ENCODE measurements at regions of chr1 and their contacts with region 1.

Region 1: GRCh38 chr1:160428655-160429054 is 28.3 kb downstream of the VANGL2 start:
- DNase-seq: peak; percentile 66
- H3K4me3 Mint-ChIP-seq: peak overlapping the region; percentile 23
- H3K27ac Mint-ChIP-seq: peak overlapping the region; percentile 88
- H3K4me1 Mint-ChIP-seq: peaks cover 65% of the 10 kb centered on the region
- H3K27me3 Mint-ChIP-seq: no peaks in the 10 kb centered on the region

Region 2: DNA sequence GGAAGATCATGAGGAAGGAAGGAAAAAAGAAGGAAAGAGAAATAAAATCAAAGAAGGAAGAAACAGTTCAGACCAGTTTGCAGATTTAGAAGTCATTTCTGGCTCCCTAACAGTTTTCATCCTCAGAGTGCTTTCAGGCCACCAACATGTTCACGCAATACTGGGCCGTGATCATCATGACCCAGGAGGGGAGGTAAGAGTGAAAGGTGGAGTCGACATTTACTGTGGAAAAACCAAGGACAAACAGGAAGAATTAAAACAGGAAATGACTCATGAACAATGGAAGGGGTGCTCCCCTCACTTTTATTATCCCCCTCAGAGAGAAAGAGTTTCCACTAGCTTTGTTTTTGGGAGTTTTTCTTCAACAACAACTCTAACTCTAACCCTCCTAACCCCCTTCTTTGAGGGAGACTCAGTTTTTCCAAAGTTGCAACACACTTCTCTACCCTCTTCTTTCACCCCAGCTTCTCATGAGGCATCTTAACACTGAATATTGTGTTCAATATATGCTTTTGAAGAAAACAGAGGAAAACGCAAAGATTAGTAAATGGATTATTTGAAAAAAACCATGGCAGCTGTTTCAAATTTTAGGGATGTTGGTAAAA is 32.1 kb after region 1 on chr1:
- CTCF ChIA-PET with region 1: interaction called, 11 read pairs
- intact Hi-C with region 1: loop called (anchors 1 kb)
- DNase-seq: peak; percentile 66
- H3K4me3 Mint-ChIP-seq: peak overlapping the region; percentile 68
- H3K27ac Mint-ChIP-seq: peak overlapping the region; percentile 99
- H3K4me1 Mint-ChIP-seq: peaks cover 91% of the 10 kb centered on the region
- H3K27me3 Mint-ChIP-seq: no peaks in the 10 kb centered on the region

Region 3: GRCh38 chr1:160474392-160475242 is 46.0 kb after region 1 on chr1:
- CTCF ChIA-PET with region 1: interaction called, 7 read pairs
- intact Hi-C with region 1: loop called (anchors 1 kb)
- DNase-seq: peak; percentile 49
- H3K4me3 Mint-ChIP-seq: no peak overlapping the region
- H3K27ac Mint-ChIP-seq: no peak overlapping the region
- H3K4me1 Mint-ChIP-seq: no peaks in the 10 kb centered on the region
- H3K27me3 Mint-ChIP-seq: no peaks in the 10 kb centered on the region

Region 4: GRCh38 chr1:160539990-160540858 is 111.6 kb after region 1 on chr1:
- CTCF ChIA-PET with region 1: interaction called, 7 read pairs
- intact Hi-C with region 1: loop called (anchors 1 kb)
- DNase-seq: peak; percentile 73
- H3K4me3 Mint-ChIP-seq: peak overlapping the region; percentile 52
- H3K27ac Mint-ChIP-seq: peak overlapping the region; percentile 96
- H3K4me1 Mint-ChIP-seq: peaks cover 55% of the 10 kb centered on the region
- H3K27me3 Mint-ChIP-seq: no peaks in the 10 kb centered on the region

Region 5: DNA sequence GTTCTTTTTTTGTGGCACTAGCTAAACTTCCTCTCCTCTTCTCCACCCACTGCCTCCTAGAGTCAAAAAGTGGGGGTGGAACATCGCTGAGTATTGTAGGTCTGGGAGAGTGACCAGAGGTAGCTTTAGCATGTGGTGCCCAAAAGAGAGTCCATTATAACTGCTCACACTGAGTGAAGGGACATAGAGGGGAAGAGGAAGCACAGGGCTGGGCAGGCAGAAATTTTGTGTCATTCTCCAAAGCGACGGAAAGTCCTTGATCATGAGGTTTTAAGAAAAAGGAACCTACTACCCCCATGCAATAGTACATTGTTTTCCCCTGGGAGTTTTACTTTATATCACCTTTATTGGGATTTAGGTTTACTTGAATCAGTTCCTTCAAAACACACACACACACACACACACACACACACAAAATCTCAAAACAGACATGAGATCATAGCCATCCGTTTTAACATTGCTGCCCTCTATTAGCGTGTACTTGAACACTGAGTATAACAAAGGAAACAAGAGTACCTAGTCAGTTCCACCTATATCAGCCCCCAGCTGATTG is 146.5 kb after region 1 on chr1:
- CTCF ChIA-PET with region 1: interaction called, 7 read pairs
- intact Hi-C with region 1: loop called (anchors 1 kb)
- DNase-seq: no peak
- H3K4me3 Mint-ChIP-seq: peak overlapping the region; percentile 46
- H3K27ac Mint-ChIP-seq: peak overlapping the region; percentile 94
- H3K4me1 Mint-ChIP-seq: peaks cover 86% of the 10 kb centered on the region
- H3K27me3 Mint-ChIP-seq: no peaks in the 10 kb centered on the region

Region 6: GRCh38 chr1:160618763-160619274 is 190.2 kb after region 1 on chr1:
- CTCF ChIA-PET with region 1: interaction called, 9 read pairs
- intact Hi-C with region 1: loop called (anchors 1 kb)
- DNase-seq: peak; percentile 70
- H3K4me3 Mint-ChIP-seq: no peak overlapping the region
- H3K27ac Mint-ChIP-seq: peak overlapping the region; percentile 61
- H3K4me1 Mint-ChIP-seq: peaks cover 57% of the 10 kb centered on the region
- H3K27me3 Mint-ChIP-seq: no peaks in the 10 kb centered on the region

Measured in activated naive CD4-positive, alpha-beta T cell treated with anti-CD3 and anti-CD28 coated beads for 36 hours (primary cell).